ENCODE measurements at regions of chr6 and their contacts with region 1.

Region 1: DNA sequence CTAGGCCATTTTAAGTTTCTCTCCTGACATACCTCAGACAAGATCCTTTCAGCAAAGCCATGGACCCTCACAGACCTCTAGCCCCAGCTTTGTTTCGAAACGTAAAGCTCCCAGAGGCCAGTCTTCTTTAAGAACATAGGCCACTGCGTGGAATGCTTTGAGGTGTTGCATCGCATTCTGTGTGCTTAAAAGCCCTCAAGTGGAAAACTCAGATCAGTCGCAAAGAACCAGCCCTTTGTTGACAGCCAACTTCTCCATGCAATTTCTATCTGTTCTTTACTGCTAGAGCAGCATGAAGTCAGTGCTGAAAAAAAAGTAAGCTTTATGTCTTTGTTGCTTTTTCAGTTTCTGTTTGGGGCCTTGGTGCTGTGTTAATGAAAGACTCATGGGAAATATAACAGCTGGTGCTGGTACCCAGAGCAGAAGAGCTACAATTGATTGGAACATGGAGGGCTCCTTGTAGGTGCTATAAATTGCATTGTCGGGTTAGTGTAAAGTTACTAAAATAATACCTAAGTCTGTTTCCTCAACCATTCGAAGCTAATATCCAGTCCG is 142.6 kb downstream of the MAP3K7 start:
- DNase-seq: peak in 1 of 9 donors; percentile 9
- ATAC-seq: no peak
- H3K4me3 ChIP-seq: no peak overlapping the region
- H3K4me3 Mint-ChIP-seq: peak overlapping the region in 8 of 10 donors; percentile 28 to 72 (median 50)
- H3K27ac ChIP-seq: no peak overlapping the region
- H3K27ac Mint-ChIP-seq: peak overlapping the region in 5 of 9 donors; percentile 25 to 78 (median 62)
- H3K4me1 ChIP-seq: no peaks in the 10 kb centered on the region
- H3K4me1 Mint-ChIP-seq: peaks cover 8 to 49% (median 19%) of the 10 kb centered on the region in 7 donors
- H3K27me3 ChIP-seq: no peaks in the 10 kb centered on the region
- H3K27me3 Mint-ChIP-seq: no peaks in the 10 kb centered on the region

Region 2: GRCh38 chr6:90458353-90459224 is 14.4 kb after region 1 on chr6:
- CTCF ChIA-PET with region 1: interaction called, 5 read pairs
- POLR2A ChIA-PET with region 1: interaction called, 6 read pairs
- intact Hi-C with region 1: loop called in 1 of 2 experiments (anchors 1 kb)
- DNase-seq: peak in 6 of 9 donors; percentile 37 to 74 (median 48)
- ATAC-seq: peak; percentile 70
- H3K4me3 ChIP-seq: peak overlapping the region; percentile 26
- H3K4me3 Mint-ChIP-seq: peak overlapping the region in 9 of 10 donors; percentile 45 to 82 (median 74)
- H3K27ac ChIP-seq: no peak overlapping the region
- H3K27ac Mint-ChIP-seq: peak overlapping the region in 8 of 9 donors; percentile 21 to 91 (median 80)
- H3K4me1 ChIP-seq: peaks cover 25 to 30% of the 10 kb centered on the region in 2 donors
- H3K4me1 Mint-ChIP-seq: peaks cover 23 to 65% (median 47%) of the 10 kb centered on the region in 7 donors
- H3K27me3 ChIP-seq: no peaks in the 10 kb centered on the region
- H3K27me3 Mint-ChIP-seq: no peaks in the 10 kb centered on the region

Measured in naive thymus-derived CD4-positive, alpha-beta T cell (primary cell).